IMR-90 (cell line): ENCODE measurements at regions of chr13 and their contacts with region 1.

Region 1: DNA sequence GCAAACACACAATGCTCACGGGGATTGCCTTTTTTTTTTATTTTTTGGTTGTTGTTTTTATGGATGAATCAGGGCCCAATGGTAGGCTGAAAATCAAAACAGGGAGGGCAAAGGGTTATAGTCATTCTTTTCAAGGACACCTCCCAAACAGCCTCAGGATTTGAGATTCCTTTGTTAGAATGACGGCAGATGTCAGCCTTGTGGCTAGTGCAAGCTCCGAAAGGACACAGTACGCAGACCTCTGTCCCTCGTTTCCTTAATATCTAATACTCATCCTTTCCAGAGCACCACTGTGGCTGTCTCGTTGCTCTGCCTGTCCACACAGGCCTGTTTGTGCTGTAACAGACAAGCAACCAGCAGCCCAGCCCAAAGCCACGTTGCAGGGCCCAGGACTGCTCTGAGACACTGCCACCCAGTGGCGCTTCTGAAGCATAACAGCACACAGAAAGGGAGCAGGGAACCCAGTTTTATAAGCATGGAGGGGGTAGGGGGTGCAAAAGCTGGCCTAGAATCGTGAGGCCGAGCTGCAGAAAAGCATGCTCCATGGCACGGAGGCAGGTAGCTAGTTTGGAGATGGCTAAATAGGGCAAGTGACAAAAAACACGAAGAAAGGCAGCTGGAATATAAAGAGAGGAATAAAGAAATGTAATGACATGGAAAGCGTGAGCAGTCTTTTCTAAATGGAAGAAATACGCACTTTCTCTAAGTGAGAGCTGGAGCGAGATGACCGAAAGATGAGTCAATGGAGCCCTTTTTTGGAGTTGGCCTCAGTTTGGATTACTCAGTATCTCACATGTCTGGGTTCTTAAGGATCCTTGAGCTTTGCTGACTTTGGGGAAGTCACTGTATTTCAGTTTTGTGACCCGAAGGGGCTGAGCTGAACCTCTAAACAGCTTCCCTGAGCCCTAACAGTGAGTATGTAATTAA is 40.7 kb upstream of the MEDAG start:
- DNase-seq: peak; percentile 96
- ATAC-seq: peak; percentile 55
- H3K4me3 ChIP-seq: peak overlapping the region; percentile 30; the same call in 1 of the 2 replicates
- H3K27ac ChIP-seq: peak overlapping the region; percentile 92
- H3K4me1 ChIP-seq: peaks cover 46% of the 10 kb centered on the region
- H3K27me3 ChIP-seq: no peaks in the 10 kb centered on the region
- CTCF ChIP-seq: peak; percentile 90
- POLR2A ChIP-seq: peak; percentile 77; the same call in 1 of the 2 replicates
- RAD21 ChIP-seq: peak; percentile 92

Region 2: GRCh38 chr13:30465585-30466357 is 399.6 kb before region 1 on chr13 and contains the start of gene HMGB1:
- CTCF ChIA-PET with region 1: interaction called, 5 read pairs
- POLR2A ChIA-PET with region 1: no interaction called
- dilution Hi-C with region 1: no loop called
- in situ Hi-C with region 1: no loop called
- intact Hi-C with region 1: loop called (anchors 2 kb)
- DNase-seq: peak; percentile 99
- ATAC-seq: peak; percentile 89
- H3K4me3 ChIP-seq: peak within 1 kb of the TSS; percentile 74
- H3K27ac ChIP-seq: peak within 1 kb of the TSS; percentile 87
- H3K4me1 ChIP-seq: peaks cover 3% of the 10 kb centered on the region
- H3K27me3 ChIP-seq: no peaks in the 10 kb centered on the region
- CTCF ChIP-seq: no peak
- POLR2A ChIP-seq: peak; percentile 93
- RAD21 ChIP-seq: no peak
- total RNA-seq, gene HMGB1: 276 and 480 TPM in 2 replicates

Region 3: GRCh38 chr13:30673669-30674521 is 191.5 kb before region 1 on chr13:
- CTCF ChIA-PET with region 1: interaction called, 4 read pairs
- POLR2A ChIA-PET with region 1: no interaction called
- dilution Hi-C with region 1: no loop called
- in situ Hi-C with region 1: loop called (anchors 10 kb)
- intact Hi-C with region 1: loop called (anchors 5 kb)
- DNase-seq: peak; percentile 89
- ATAC-seq: peak; percentile 91
- H3K4me3 ChIP-seq: peak overlapping the region; percentile 58
- H3K27ac ChIP-seq: peak overlapping the region; percentile 42
- H3K4me1 ChIP-seq: peaks cover 2% of the 10 kb centered on the region
- H3K27me3 ChIP-seq: no peaks in the 10 kb centered on the region
- CTCF ChIP-seq: peak; percentile 77
- POLR2A ChIP-seq: no peak
- RAD21 ChIP-seq: peak; percentile 60

Region 4: GRCh38 chr13:30802953-30803478 is 62.4 kb before region 1 on chr13:
- CTCF ChIA-PET with region 1: interaction called, 5 read pairs
- POLR2A ChIA-PET with region 1: no interaction called
- dilution Hi-C with region 1: no loop called
- in situ Hi-C with region 1: no loop called
- intact Hi-C with region 1: loop called (anchors 2 kb)
- DNase-seq: peak; percentile 70
- ATAC-seq: peak; percentile 88
- H3K4me3 ChIP-seq: no peak overlapping the region
- H3K27ac ChIP-seq: peak overlapping the region; percentile 10
- H3K4me1 ChIP-seq: peaks cover 24% of the 10 kb centered on the region
- H3K27me3 ChIP-seq: no peaks in the 10 kb centered on the region
- CTCF ChIP-seq: peak; percentile 89
- POLR2A ChIP-seq: no peak
- RAD21 ChIP-seq: peak; percentile 98

Region 5: GRCh38 chr13:30972832-30973377 is 107.5 kb after region 1 on chr13:
- CTCF ChIA-PET with region 1: no interaction called
- POLR2A ChIA-PET with region 1: no interaction called
- dilution Hi-C with region 1: no loop called
- in situ Hi-C with region 1: no loop called
- intact Hi-C with region 1: loop called (anchors 1 kb)
- DNase-seq: peak; percentile 45
- ATAC-seq: no peak
- H3K4me3 ChIP-seq: no peak overlapping the region
- H3K27ac ChIP-seq: peak overlapping the region; percentile 34; the same call in 1 of the 2 replicates
- H3K4me1 ChIP-seq: peaks cover 25% of the 10 kb centered on the region
- H3K27me3 ChIP-seq: no peaks in the 10 kb centered on the region
- CTCF ChIP-seq: no peak
- POLR2A ChIP-seq: no peak
- RAD21 ChIP-seq: no peak

Region 6: GRCh38 chr13:31012655-31013024 is 147.3 kb after region 1 on chr13:
- CTCF ChIA-PET with region 1: interaction called, 3 read pairs
- POLR2A ChIA-PET with region 1: no interaction called
- dilution Hi-C with region 1: no loop called
- in situ Hi-C with region 1: no loop called
- intact Hi-C with region 1: loop called (anchors 1 kb)
- DNase-seq: peak; percentile 46
- ATAC-seq: no peak
- H3K4me3 ChIP-seq: no peak overlapping the region
- H3K27ac ChIP-seq: no peak overlapping the region
- H3K4me1 ChIP-seq: no peaks in the 10 kb centered on the region; the same call in 1 of the 2 replicates
- H3K27me3 ChIP-seq: no peaks in the 10 kb centered on the region; the same call in 1 of the 2 replicates
- CTCF ChIP-seq: peak; percentile 60
- POLR2A ChIP-seq: no peak
- RAD21 ChIP-seq: peak; percentile 73